ENCODE measurements at regions of chr11 and their contacts with region 1.

Region 1: GRCh38 chr11:10405855-10406592 is 49.0 kb upstream of the AMPD3 start:
- DNase-seq: peak; percentile 89
- H3K4me3 Mint-ChIP-seq: no peak overlapping the region
- H3K27ac Mint-ChIP-seq: peak overlapping the region; percentile 40
- H3K4me1 Mint-ChIP-seq: peaks cover 26% of the 10 kb centered on the region
- H3K27me3 Mint-ChIP-seq: no peaks in the 10 kb centered on the region
- CTCF ChIP-seq: peak; percentile 63

Region 2: GRCh38 chr11:9992306-9992705 is 413.7 kb before region 1 on chr11:
- CTCF ChIA-PET with region 1: no interaction called
- POLR2A ChIA-PET with region 1: no interaction called
- intact Hi-C with region 1: no loop called
- DNase-seq: no peak
- H3K4me3 Mint-ChIP-seq: no peak overlapping the region
- H3K27ac Mint-ChIP-seq: no peak overlapping the region
- H3K4me1 Mint-ChIP-seq: no peaks in the 10 kb centered on the region
- H3K27me3 Mint-ChIP-seq: no peaks in the 10 kb centered on the region
- CTCF ChIP-seq: no peak

Region 3: GRCh38 chr11:10450464-10451425 is 44.7 kb after region 1 on chr11:
- CTCF ChIA-PET with region 1: interaction called, 7 read pairs
- POLR2A ChIA-PET with region 1: interaction called, 5 read pairs
- intact Hi-C with region 1: loop called (anchors 5 kb)
- DNase-seq: peak; percentile 49
- H3K4me3 Mint-ChIP-seq: peak overlapping the region; percentile 78
- H3K27ac Mint-ChIP-seq: peak overlapping the region; percentile 71
- H3K4me1 Mint-ChIP-seq: peaks cover 6% of the 10 kb centered on the region
- H3K27me3 Mint-ChIP-seq: no peaks in the 10 kb centered on the region
- CTCF ChIP-seq: peak; percentile 33

Region 4: GRCh38 chr11:10514210-10514609 is 108.2 kb after region 1 on chr11:
- CTCF ChIA-PET with region 1: interaction called, 6 read pairs
- POLR2A ChIA-PET with region 1: interaction called, 4 read pairs
- intact Hi-C with region 1: loop called (anchors 2 kb)
- DNase-seq: peak; percentile 14
- H3K4me3 Mint-ChIP-seq: no peak overlapping the region
- H3K27ac Mint-ChIP-seq: no peak overlapping the region
- H3K4me1 Mint-ChIP-seq: no peaks in the 10 kb centered on the region
- H3K27me3 Mint-ChIP-seq: no peaks in the 10 kb centered on the region
- CTCF ChIP-seq: peak; percentile 35

Region 5: GRCh38 chr11:10534316-10534715 is 128.3 kb after region 1 on chr11:
- CTCF ChIA-PET with region 1: interaction called, 10 read pairs
- POLR2A ChIA-PET with region 1: interaction called, 3 read pairs
- intact Hi-C with region 1: no loop called
- DNase-seq: no peak
- H3K4me3 Mint-ChIP-seq: no peak overlapping the region
- H3K27ac Mint-ChIP-seq: no peak overlapping the region
- H3K4me1 Mint-ChIP-seq: peaks cover 5% of the 10 kb centered on the region
- H3K27me3 Mint-ChIP-seq: no peaks in the 10 kb centered on the region
- CTCF ChIP-seq: no peak

Region 6: DNA sequence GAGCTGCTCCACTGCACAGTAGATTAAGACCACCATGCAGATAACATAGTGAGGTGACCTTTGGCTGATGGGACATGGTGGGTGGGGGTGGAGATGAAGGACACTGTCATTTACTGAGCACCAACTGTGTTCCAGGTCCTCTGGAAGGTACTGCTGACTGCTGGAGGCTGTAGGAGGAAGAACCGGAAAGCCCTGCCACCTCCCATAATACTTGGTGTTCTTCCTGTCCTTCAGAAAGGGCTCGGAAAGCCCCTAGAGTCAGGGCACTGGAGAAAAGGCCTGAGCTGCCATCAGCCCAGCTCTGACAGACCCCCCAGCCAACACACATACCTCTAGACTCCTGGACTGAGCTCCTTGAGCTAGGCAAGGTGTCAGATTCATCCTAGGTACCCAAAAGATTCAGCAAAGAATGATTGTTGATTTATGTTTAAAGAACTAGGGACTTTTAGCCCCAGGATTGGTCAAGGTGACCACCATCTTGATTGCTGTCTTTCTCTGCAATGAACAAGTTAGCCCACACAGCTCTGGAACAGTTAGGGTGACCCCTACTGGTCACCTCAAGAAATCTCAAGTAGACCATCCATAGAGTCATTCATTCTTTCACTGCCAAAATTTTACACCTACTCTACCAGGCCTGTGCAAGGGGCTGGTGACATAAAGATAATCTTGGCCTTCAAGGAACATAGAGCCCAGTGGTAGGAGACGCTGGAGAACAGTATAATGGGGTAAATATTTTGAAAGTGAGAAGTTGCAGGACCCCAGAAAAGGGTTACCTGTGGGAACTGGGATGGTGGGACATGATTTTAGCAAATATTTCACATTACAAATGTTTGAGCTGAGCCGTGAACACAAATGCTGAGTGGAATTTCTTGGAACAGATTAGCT is 248.1 kb after region 1 on chr11:
- CTCF ChIA-PET with region 1: interaction called, 79 read pairs
- POLR2A ChIA-PET with region 1: interaction called, 5 read pairs
- intact Hi-C with region 1: loop called (anchors 1 kb)
- DNase-seq: peak; percentile 80
- H3K4me3 Mint-ChIP-seq: no peak overlapping the region
- H3K27ac Mint-ChIP-seq: no peak overlapping the region
- H3K4me1 Mint-ChIP-seq: peaks cover 4% of the 10 kb centered on the region
- H3K27me3 Mint-ChIP-seq: no peaks in the 10 kb centered on the region
- CTCF ChIP-seq: peak; percentile 87

Region 7: DNA sequence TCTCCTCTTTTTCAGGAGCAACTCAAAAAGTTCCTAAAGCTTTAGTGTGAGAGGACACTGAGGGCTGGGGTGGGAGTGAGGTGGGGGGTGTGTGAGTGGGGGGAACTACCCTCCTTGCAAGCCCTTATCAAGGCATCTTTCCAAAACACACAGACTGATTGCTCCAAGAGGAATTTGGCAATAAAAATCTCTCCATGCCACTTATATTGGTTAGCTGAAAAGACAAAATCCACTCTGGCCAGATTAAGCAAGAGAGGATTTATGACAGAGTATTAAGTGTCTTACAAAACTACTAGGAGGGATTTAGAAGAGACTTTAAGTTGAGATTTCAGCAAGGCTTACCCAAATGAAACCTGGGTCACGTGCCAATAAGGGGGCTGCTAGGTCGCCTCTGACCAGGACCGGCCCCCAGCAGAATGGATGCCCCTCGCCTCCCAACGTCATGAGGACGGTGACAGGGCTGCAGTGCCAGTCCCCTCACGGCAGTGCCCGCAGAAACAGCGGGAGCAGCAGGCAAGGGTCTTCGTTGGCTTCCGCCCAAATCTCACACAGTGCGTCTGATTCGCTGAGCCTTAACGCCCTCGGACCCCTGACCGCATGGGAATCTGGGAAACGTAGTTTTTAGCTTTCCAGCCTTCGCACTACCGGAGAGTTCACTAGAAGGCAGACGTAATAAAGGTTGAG is 322.9 kb after region 1 on chr11:
- CTCF ChIA-PET with region 1: interaction called, 15 read pairs
- POLR2A ChIA-PET with region 1: no interaction called
- intact Hi-C with region 1: no loop called
- DNase-seq: no peak
- H3K4me3 Mint-ChIP-seq: no peak overlapping the region
- H3K27ac Mint-ChIP-seq: no peak overlapping the region
- H3K4me1 Mint-ChIP-seq: no peaks in the 10 kb centered on the region
- H3K27me3 Mint-ChIP-seq: peaks cover 17% of the 10 kb centered on the region
- CTCF ChIP-seq: no peak